Mammary epithelial cell (primary cell): ENCODE measurements at regions of chr12 and their contacts with region 1.

Region 1: DNA sequence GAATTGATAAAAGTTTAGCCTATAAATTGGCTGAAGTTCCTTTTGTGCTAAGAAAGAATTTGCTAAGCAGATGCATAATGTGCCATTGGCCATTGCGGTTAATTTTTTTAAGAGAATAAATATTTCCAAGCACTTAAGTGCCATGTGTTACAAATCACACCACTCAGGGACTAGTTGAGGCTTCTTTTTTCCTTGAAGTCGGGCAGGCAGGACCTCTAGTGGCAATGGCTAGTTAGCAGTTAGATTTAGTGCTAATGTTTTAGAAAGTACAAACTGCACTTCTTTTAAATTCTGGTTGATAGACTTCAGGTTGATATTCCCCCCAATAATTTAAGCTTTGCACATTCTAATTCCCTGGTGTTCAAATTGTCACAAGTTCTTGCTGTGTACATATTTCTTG is 294.3 kb downstream of the APAF1 start:
- DNase-seq: peak; percentile 19
- H3K4me3 ChIP-seq: no peak overlapping the region
- H3K27ac ChIP-seq: no peak overlapping the region
- H3K4me1 ChIP-seq: no peaks in the 10 kb centered on the region
- H3K27me3 ChIP-seq: no peaks in the 10 kb centered on the region
- CTCF ChIP-seq: peak; percentile 50 to 67

Region 2: DNA sequence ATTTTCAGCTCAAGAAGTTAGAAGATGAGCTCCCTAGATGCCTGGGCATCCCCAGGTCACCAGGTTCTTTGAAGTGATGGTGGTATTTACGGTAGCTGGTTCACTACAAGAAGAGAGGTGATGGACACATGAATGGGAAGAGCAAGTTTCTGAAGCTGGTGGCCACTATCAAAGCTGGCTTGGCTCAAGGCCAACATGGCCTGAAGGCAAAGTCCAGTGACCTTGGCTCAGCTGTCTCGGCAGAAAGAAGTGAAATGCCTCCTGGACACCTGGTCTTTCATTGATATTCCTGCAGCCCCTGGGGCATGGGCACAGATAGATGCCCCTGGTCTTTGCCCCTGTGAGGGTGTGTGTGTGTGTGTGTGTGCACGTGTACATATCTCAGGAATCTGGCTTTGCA is 865.8 kb before region 1 on chr12:
- CTCF ChIA-PET with region 1: no interaction called
- dilution Hi-C with region 1: no loop called
- in situ Hi-C with region 1: no loop called
- intact Hi-C with region 1: no loop called
- DNase-seq: no peak
- H3K4me3 ChIP-seq: no peak overlapping the region
- H3K27ac ChIP-seq: no peak overlapping the region
- H3K4me1 ChIP-seq: no peaks in the 10 kb centered on the region
- H3K27me3 ChIP-seq: no peaks in the 10 kb centered on the region
- CTCF ChIP-seq: no peak

Region 3: DNA sequence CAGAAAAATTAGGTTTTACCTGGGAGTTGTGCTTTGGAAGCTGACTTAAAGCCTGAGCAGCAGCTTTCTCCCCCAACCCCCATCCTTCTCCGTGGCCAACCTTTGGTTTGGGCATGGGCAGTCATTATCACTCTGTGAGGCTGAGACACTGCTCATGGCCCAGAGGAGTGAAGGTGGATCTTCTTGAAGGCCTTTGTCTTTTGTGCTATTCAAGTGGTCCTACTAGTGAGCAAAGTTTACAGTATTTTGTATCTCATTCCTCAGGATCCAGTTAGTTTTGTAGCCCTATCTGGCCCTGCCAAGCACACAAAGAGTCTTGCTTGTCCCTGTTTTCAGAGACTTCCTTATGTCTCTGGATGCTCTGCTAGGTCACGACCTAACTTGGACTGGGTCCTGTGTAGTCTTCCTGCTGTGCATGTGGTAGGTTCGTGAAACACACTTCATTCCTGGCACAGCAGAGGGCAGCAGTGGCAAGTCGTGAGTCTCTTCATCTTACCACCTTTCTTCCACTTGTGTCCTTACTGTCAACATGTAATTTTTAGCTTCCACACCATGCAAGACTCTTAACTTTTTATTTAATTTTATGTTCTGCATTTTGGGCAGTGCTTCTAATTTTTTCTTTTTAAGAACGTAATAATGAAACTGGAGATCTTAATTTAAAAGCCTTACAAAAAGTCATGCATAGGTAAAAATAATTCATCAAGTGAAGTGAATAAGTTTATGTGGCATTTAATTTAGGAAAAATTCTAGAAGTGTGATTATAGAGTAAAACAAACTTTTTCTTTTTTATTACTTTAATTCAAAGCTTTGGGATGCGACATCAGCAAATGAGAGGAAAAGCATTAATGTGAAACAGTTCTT is 240.5 kb before region 1 on chr12:
- CTCF ChIA-PET with region 1: no interaction called
- dilution Hi-C with region 1: no loop called
- in situ Hi-C with region 1: no loop called
- intact Hi-C with region 1: loop called (anchors 1 kb)
- DNase-seq: peak; percentile 44
- H3K4me3 ChIP-seq: no peak overlapping the region
- H3K27ac ChIP-seq: no peak overlapping the region
- H3K4me1 ChIP-seq: no peaks in the 10 kb centered on the region
- H3K27me3 ChIP-seq: no peaks in the 10 kb centered on the region
- CTCF ChIP-seq: peak; percentile 67 to 79

Region 4: DNA sequence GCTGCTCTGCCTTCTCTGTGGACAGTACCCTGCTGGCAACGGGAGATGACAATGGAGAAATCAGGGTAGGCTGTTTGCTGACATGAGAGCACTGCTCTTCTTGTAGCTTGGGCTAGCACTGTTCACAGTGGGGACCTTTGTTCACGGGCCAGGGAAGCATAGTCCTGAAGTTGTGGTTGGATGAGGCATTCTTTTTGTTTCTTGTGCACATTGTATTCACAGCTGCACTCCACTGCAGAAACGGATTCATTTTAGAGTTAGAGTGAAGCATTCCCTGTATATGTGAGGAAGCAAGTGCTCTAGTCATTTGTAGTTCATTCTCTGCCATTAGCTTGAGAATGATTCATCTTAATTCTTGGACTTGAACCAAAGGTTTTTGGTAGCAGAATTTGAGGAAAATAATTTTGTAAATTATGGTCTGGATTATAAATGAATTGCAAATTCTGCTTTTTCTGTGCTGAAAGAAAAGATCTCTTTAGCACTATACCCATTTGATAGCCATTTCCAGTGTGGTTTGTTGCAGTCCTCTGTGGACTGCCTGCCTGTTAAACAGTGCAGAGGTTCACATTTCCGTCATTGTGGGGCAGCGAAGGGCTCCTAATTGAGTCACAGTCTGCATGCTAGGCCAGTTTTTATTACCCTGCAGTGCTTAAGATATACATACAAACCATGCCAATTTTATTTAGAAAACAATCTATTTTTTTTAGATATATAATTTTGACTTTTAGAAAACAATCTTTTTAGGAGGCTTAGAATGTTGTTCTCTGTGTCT is 213.7 kb before region 1 on chr12:
- CTCF ChIA-PET with region 1: no interaction called
- dilution Hi-C with region 1: no loop called
- in situ Hi-C with region 1: no loop called
- intact Hi-C with region 1: loop called (anchors 2 kb)
- DNase-seq: peak; percentile 41
- H3K4me3 ChIP-seq: no peak overlapping the region
- H3K27ac ChIP-seq: no peak overlapping the region
- H3K4me1 ChIP-seq: no peaks in the 10 kb centered on the region
- H3K27me3 ChIP-seq: no peaks in the 10 kb centered on the region
- CTCF ChIP-seq: peak; percentile 41 to 47